Cardiac septum (tissue), 1 donor: ENCODE measurements at regions of chr5 and their contacts with region 1.

Region 1: GRCh38 chr5:90866333-90866732 is 307.7 kb downstream of the ADGRV1 start:
- DNase-seq: no peak

Region 2: DNA sequence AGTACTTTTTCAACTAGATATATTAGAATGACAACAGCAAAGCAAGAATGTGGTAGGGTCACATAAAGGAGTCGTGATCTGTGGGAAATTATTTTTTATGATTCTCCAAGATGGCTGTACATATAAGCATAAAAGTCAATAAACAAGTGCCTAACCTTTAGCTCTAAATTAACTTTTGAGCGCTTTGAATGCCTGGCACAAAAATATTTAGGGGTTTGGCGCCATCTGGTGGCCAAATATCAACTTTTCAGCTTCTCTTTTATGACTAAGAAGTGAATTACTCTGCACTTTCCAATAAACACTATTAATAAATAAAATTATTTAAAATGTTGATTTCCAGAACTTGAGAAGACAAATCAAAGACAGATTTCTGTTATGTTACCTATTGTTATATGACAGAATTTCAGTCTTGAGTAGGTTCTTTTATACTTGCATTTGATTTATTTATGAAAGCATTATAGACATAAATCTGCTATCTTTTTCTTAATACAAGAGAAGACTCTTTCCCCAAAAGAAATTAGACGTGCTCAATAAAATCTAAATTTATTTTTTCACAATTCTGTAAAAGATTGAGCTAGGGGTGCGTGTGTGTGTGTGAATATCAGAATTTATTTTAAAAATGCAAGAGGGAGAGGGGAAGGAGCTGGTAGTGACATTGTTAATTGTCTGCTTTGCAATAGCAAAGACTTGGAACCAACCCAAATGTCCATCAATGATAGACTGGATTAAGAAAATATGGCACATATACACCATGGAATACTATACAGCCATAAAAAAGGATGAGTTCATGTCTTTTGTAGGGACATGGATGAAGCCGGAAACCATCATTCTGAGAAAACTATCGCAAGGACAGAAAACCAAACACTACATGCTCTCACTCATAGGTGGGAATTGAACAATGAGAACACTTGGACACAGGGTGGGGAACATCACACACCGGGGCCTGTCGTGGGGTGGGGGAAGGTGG is 553.5 kb after region 1 on chr5:
- intact Hi-C with region 1: loop called (anchors 2 kb)
- DNase-seq: no peak